H1 (cell line): ENCODE measurements at regions of chr1 and their contacts with region 1.

Region 1: DNA sequence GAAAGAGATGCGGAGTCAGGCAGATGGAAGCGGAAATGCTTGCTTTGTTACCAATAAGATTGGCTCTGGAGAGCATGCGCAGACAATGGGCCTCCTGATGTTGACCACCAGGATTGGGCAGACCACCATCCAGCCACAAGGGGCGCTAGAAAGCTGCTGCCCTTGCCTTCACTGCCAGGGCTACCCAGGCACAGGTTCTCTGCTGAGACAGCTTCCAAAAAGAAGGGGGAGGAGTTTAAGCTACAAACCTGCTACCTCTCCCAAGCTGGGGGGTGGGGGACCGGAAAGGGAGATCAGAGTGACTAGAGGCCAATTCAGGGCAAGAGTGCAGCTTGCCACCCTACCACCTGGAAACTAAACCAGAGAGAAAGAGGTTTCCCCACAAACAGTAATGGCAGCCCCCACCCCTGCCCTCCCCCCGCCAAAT is 369.7 kb downstream of the RRAGC start:
- DNase-seq: peak; percentile 96 to 98
- H3K4me3 ChIP-seq: no peak overlapping the region
- H3K27ac ChIP-seq: no peak overlapping the region
- H3K4me1 ChIP-seq: peaks cover 0 to 9% (median 4%) of the 10 kb centered on the region in 4 experiments; a peak in 4 of 7 replicates
- H3K27me3 ChIP-seq: no peaks in the 10 kb centered on the region; a peak in 2 of 7 replicates
- CTCF ChIP-seq: peak; percentile 91 to 100 (median 98)
- EP300 ChIP-seq: no peak; a peak in 1 of 3 replicates
- POLR2A ChIP-seq: no peak
- RAD21 ChIP-seq: peak; percentile 78 to 81

Region 2: DNA sequence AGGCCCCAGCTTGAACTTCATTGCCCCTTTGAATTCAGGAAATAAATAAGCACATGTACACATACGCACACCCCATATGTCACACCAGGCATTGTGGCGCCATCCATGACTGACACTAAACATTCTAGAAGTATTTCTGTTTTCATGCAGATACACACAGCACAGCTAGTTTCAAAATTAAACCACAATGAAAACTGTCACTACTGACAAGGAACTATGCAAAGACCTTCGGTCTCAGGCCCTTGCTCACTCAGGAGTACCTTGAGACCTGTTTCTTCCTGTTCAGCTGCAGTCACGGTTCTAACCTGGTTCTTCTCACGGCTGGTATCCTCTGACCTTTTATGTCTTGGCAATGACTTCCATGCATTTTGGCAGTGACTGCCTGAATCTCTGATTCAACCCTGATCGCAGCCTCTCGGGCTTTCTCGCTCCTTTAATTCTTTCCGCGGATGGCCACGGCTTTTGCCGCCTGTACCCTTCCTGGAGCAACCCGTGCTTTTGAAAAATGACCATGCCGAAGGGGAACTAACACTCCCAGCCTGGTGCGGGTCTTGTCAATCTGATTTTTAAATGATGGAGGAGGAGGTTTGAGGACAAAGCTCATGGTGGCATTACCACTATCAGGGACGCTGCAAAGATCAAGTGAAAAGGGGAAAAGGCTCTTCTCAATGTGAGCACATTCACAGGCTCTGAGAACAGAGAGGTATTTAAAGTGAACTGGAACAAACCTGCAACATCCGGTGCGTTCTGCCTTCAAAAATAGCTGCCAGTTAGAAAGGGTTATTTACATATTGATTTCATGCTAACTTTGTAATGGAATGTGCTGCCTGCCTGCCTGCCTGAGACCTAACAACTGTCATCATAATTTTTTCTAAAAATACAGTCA is 14.9 kb before region 1 on chr1:
- CTCF ChIA-PET with region 1: interaction called, 12 read pairs
- POLR2A ChIA-PET with region 1: interaction called, 10 read pairs
- DNase-seq: no peak
- H3K4me3 ChIP-seq: peak overlapping the region in 1 of 4 experiments; percentile 61; a peak in 4 of 8 replicates
- H3K27ac ChIP-seq: no peak overlapping the region
- H3K4me1 ChIP-seq: peaks cover 6 to 16% (median 12%) of the 10 kb centered on the region in 4 experiments; a peak in 6 of 7 replicates
- H3K27me3 ChIP-seq: peaks cover 0 to 7% (median 0%) of the 10 kb centered on the region in 4 experiments; a peak in 3 of 7 replicates
- CTCF ChIP-seq: no peak
- EP300 ChIP-seq: no peak
- POLR2A ChIP-seq: peak in 1 of 2 experiments; percentile 21; a peak in 1 of 3 replicates
- RAD21 ChIP-seq: no peak